ENCODE measurements at regions of chr1 and their contacts with region 1.

Region 1: GRCh38 chr1:158485455-158485854 is 13.4 kb downstream of the OR10R2 start:
- DNase-seq: no peak
- H3K4me3 ChIP-seq: no peak overlapping the region
- H3K27ac ChIP-seq: no peak overlapping the region
- H3K4me1 ChIP-seq: no peaks in the 10 kb centered on the region
- H3K27me3 ChIP-seq: no peaks in the 10 kb centered on the region
- CTCF ChIP-seq: no peak
- POLR2A ChIP-seq: no peak

Region 2: DNA sequence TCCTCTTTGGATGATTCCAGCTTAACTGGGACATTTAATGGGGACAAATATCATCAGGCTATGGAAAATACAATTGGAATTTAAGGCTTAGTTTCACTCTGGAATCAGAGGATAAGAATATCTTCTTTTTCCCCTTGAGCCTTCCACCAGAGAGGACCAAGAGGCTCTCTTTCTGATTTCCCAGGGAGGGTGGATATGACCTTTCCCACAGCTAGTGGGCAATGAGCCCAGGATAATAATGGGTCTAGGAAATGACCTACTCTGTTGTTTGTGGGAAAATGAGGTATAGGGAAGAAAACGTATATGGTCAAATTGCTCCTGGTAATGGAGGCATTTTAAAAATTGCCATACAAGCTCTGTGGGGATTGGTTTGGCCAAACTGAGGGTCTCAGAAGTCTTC is 66.8 kb after region 1 on chr1:
- intact Hi-C with region 1: loop called (anchors 5 kb)
- DNase-seq: no peak
- H3K4me3 ChIP-seq: no peak overlapping the region
- H3K27ac ChIP-seq: no peak overlapping the region
- H3K4me1 ChIP-seq: no peaks in the 10 kb centered on the region
- H3K27me3 ChIP-seq: no peaks in the 10 kb centered on the region
- CTCF ChIP-seq: no peak
- POLR2A ChIP-seq: no peak

Measured in breast epithelium (tissue), 4 donors.